ENCODE measurements at regions of chr12 and their contacts with region 1.

Region 1: GRCh38 chr12:119544765-119545625 is 48.6 kb upstream of the TMEM233 start:
- DNase-seq: peak; percentile 49
- ATAC-seq: peak; percentile 68

Region 2: DNA sequence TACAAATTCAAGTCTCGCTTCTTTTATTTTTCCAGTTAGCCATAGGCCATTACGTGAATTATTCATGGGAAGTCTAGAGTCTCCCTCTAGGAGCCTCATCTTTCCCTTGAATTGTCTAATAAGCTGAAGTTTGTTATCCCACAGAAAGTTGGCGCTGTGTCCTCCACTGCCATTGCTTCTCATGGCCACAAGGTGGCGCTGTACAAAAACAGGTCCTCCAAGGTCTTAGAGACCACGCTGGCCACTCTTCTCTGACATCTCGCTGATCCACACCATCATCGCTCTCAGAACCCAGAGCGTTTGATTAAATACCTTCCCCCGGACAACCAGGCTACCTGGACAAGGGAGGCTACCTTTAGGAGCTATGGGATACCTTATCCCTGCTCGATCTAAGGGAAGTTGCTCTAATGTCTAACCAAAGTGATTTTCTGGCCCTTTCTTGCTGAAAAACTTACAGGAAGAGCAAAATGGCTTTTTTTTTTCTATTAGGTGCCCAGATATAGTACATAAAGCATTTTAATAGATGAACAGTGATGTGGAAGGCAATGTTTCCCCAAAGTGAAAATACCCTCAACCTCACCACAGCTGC is 100.4 kb before region 1 on chr12:
- intact Hi-C with region 1: loop called (anchors 2 kb)
- DNase-seq: peak; percentile 37
- ATAC-seq: no peak

Region 3: DNA sequence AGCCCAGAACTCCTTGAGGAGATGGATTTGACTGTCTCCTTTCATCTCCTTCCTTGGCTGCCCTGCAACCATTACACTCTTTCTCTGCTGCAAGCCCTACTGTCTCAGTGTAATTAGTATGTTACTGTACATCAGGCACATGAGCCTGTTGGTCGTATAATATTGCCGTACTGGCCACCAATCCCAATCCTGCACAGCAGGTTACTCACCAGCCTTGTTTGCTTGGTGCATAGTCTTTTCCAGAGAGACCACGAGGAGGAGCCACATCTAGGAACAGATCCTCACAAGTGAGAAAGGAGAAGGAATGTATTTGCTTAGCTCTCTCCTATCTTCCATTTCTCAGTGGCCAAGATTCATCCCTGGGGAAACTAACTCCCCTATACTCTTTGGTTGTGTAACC is 411.0 kb after region 1 on chr12:
- intact Hi-C with region 1: no loop called
- DNase-seq: no peak
- ATAC-seq: no peak

Measured in left ventricle myocardium superior (tissue), 1 donor.